Left cardiac atrium (tissue), 4 donors: ENCODE measurements at regions of chr1 and their contacts with region 1.

Region 1: GRCh38 chr1:162056043-162056442 is 13.4 kb upstream of the NOS1AP start:
- DNase-seq: peak; percentile 56
- ATAC-seq: peak; percentile 95 to 96

Region 2: GRCh38 chr1:162069328-162070093 is 13.5 kb after region 1 on chr1 and contains the start of gene NOS1AP:
- intact Hi-C with region 1: no loop called
- DNase-seq: peak; percentile 85
- ATAC-seq: peak; percentile 98 to 99
- total RNA-seq, gene NOS1AP: 1.8 to 2.8 TPM

Region 3: GRCh38 chr1:162276493-162276892 is 220.4 kb after region 1 on chr1:
- intact Hi-C with region 1: loop called (anchors 2 to 10 kb)
- DNase-seq: no peak
- ATAC-seq: peak in 1 of 2 donors; percentile 53

Region 4: GRCh38 chr1:162391790-162392563 is 335.9 kb after region 1 on chr1:
- intact Hi-C with region 1: loop called (anchors 1 to 5 kb)
- DNase-seq: no peak
- ATAC-seq: peak; percentile 34 to 54